Naive thymus-derived CD4-positive, alpha-beta T cell (primary cell): ENCODE measurements at regions of chr1 and their contacts with region 1.

Region 1: DNA sequence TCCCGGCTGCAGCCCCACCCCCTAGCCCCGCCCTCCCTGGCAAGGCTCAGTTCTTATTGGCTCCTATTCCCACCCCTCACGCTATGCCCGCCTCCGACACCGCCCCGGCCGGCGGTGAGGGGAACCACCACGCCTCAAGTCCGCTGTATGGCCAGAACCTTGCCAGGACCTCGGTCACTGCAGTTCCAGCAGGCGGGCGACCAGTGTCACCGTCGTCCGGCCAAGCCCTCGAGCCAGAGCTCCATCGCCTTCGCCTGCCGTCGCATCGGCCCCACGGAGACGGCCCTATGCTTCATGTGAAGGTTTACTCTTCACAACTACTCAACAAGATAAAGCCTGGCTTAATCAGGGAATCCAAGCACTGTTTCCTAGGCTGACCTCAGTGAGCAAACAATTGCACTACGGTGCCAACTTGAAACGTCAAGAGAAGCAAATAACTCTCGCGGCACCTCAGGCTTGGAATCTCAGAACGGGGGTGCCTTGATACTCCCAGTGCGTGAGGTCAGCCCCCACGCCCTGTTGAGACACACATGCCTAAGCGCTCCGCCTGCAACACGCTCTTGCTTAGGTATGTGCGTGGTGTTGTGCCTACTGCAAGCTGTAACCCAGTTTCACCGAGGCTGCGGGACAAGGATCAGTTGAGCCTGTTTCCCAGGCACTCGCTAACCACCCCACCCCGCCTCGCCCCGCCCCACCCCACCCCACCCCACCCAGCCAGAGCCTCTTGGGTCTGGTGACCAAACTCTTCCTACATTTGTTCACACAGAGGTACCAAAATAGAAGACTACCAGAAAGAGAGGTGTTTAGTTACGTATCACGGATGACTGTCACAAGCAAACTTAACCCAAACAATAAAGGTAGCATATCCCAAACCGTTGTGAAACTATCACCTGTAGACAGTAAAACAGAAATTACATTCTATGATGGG is 498 bp upstream of the DENND2C start:
- DNase-seq: peak; percentile 60 to 84 (median 76)
- ATAC-seq: peak; percentile 99
- H3K4me3 ChIP-seq: peak overlapping the region; percentile 77
- H3K4me3 Mint-ChIP-seq: peak overlapping the region; percentile 84 to 98 (median 96)
- H3K27ac ChIP-seq: peak overlapping the region; percentile 45
- H3K27ac Mint-ChIP-seq: peak overlapping the region in 7 of 9 donors; percentile 58 to 91 (median 82)
- H3K4me1 ChIP-seq: no peaks in the 10 kb centered on the region
- H3K4me1 Mint-ChIP-seq: peaks cover 0 to 16% (median 9%) of the 10 kb centered on the region in 7 donors
- H3K27me3 ChIP-seq: no peaks in the 10 kb centered on the region
- H3K27me3 Mint-ChIP-seq: peaks cover 2 to 60% (median 14%) of the 10 kb centered on the region in 5 donors

Region 2: GRCh38 chr1:113978863-113979702 is 691.3 kb before region 1 on chr1 and contains the start of gene OLFML3:
- CTCF ChIA-PET with region 1: interaction called, 3 read pairs
- POLR2A ChIA-PET with region 1: no interaction called
- intact Hi-C with region 1: loop called in 1 of 2 experiments (anchors 2 kb)
- DNase-seq: peak in 5 of 9 donors; percentile 11 to 28 (median 17)
- ATAC-seq: peak; percentile 60
- H3K4me3 ChIP-seq: no peak within 1 kb of the TSS
- H3K4me3 Mint-ChIP-seq: no peak within 1 kb of the TSS
- H3K27ac ChIP-seq: no peak within 1 kb of the TSS
- H3K27ac Mint-ChIP-seq: peak within 1 kb of the TSS in 7 of 9 donors; percentile 31 to 48 (median 40)
- H3K4me1 ChIP-seq: peaks cover 0 to 11% of the 10 kb centered on the region in 2 donors
- H3K4me1 Mint-ChIP-seq: peaks cover 24 to 49% (median 35%) of the 10 kb centered on the region in 7 donors
- H3K27me3 ChIP-seq: no peaks in the 10 kb centered on the region
- H3K27me3 Mint-ChIP-seq: no peaks in the 10 kb centered on the region
- total RNA-seq, gene OLFML3: 0.24 to 1.8 (median 1.1) TPM

Region 3: GRCh38 chr1:114511032-114511785 is 159.1 kb before region 1 on chr1 and contains the start of gene TRIM33:
- CTCF ChIA-PET with region 1: no interaction called
- POLR2A ChIA-PET with region 1: interaction called, 4 read pairs
- intact Hi-C with region 1: loop called in 1 of 2 experiments (anchors 1 kb)
- DNase-seq: peak; percentile 91 to 95 (median 93)
- ATAC-seq: peak; percentile 89
- H3K4me3 ChIP-seq: peak within 1 kb of the TSS; percentile 71
- H3K4me3 Mint-ChIP-seq: peak within 1 kb of the TSS; percentile 86 to 99 (median 97)
- H3K27ac ChIP-seq: peak within 1 kb of the TSS; percentile 100
- H3K27ac Mint-ChIP-seq: peak within 1 kb of the TSS; percentile 98 to 100 (median 99)
- H3K4me1 ChIP-seq: peaks cover 22 to 29% of the 10 kb centered on the region in 2 donors
- H3K4me1 Mint-ChIP-seq: peaks cover 41 to 63% (median 52%) of the 10 kb centered on the region in 7 donors
- H3K27me3 ChIP-seq: no peaks in the 10 kb centered on the region
- H3K27me3 Mint-ChIP-seq: peaks cover 0 to 7% (median 0%) of the 10 kb centered on the region in 5 donors
- total RNA-seq, gene TRIM33: 43.8 to 57.6 (median 51.1) TPM

Region 4: DNA sequence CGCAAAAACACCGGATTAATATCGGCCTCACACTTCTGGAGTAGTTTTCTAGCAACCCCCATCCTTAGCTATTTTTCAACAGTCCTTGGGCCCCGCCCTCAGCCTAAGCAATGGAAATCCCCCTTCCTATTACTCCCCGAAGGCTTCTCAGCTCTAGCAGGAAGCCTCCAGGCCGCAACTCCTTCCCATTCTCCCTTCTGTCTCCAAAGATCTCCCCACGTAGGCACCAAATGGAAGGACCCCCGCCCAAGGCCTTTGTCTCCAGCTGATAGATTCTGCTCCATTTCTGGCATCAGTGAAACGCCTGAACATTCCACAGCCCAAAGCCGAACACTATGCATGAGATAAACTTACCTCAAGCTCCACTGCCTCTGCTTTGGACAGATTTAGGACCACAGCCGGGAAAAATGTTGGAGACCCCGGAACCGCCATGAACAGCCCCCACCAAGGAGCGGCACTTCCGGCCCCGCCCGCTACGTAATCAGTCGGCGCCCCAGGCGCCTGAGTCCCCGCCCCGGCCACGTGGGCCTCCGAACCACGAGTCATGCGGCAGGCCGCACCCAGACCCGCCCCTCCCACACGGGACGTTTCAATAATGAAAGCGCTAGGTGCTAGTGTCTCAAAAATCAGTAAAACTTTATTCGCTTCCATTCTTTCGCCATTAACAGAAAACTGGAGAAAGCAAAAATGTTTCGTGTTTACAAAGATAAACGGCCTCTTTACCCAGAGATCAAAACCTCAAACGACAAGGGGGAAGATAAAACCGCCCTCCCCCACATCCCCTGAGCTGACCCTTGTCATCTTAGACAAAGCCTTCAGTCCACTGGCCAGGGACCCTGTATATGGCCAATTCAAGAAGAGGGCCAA is 46.2 kb after region 1 on chr1 and contains the start of gene NRAS:
- CTCF ChIA-PET with region 1: no interaction called
- POLR2A ChIA-PET with region 1: no interaction called
- intact Hi-C with region 1: loop called (anchors 1 to 2 kb)
- DNase-seq: peak; percentile 90 to 96 (median 94)
- ATAC-seq: peak; percentile 98
- H3K4me3 ChIP-seq: peak within 1 kb of the TSS; percentile 98
- H3K4me3 Mint-ChIP-seq: peak within 1 kb of the TSS; percentile 91 to 100 (median 96)
- H3K27ac ChIP-seq: peak within 1 kb of the TSS; percentile 98
- H3K27ac Mint-ChIP-seq: peak within 1 kb of the TSS; percentile 93 to 99 (median 97)
- H3K4me1 ChIP-seq: peaks cover 17 to 20% of the 10 kb centered on the region in 2 donors
- H3K4me1 Mint-ChIP-seq: peaks cover 10 to 34% (median 25%) of the 10 kb centered on the region in 7 donors
- H3K27me3 ChIP-seq: no peaks in the 10 kb centered on the region
- H3K27me3 Mint-ChIP-seq: no peaks in the 10 kb centered on the region
- total RNA-seq, gene NRAS: 22.3 to 56.0 (median 25.0) TPM

Region 5: GRCh38 chr1:115089420-115090185 is 419.3 kb after region 1 on chr1 and contains the start of gene TSPAN2:
- CTCF ChIA-PET with region 1: no interaction called
- POLR2A ChIA-PET with region 1: no interaction called
- intact Hi-C with region 1: loop called in 1 of 2 experiments (anchors 2 kb)
- DNase-seq: peak; percentile 43 to 63 (median 57)
- ATAC-seq: peak; percentile 90
- H3K4me3 ChIP-seq: peak within 1 kb of the TSS; percentile 76
- H3K4me3 Mint-ChIP-seq: peak within 1 kb of the TSS; percentile 74 to 88 (median 84)
- H3K27ac ChIP-seq: peak within 1 kb of the TSS; percentile 69
- H3K27ac Mint-ChIP-seq: peak within 1 kb of the TSS; percentile 7 to 93 (median 71)
- H3K4me1 ChIP-seq: peaks cover 6 to 9% of the 10 kb centered on the region in 2 donors
- H3K4me1 Mint-ChIP-seq: peaks cover 10 to 54% (median 29%) of the 10 kb centered on the region in 7 donors
- H3K27me3 ChIP-seq: no peaks in the 10 kb centered on the region
- H3K27me3 Mint-ChIP-seq: peaks cover 0 to 29% (median 0%) of the 10 kb centered on the region in 5 donors
- total RNA-seq, gene TSPAN2: 0.30 to 12.0 (median 2.9) TPM in 4 of 5 experiments, not detected in the other